B cell (primary cell): ENCODE measurements at regions of chr6 and their contacts with region 1.

Region 1: GRCh38 chr6:134235937-134236751 is 81.8 kb downstream of the SGK1 start:
- DNase-seq: peak; percentile 87
- ATAC-seq: peak; percentile 84
- H3K4me3 ChIP-seq: peak overlapping the region in 1 of 5 experiments; percentile 10
- H3K4me3 Mint-ChIP-seq: peak overlapping the region; percentile 52
- H3K27ac ChIP-seq: peak overlapping the region; percentile 94 to 97
- H3K27ac Mint-ChIP-seq: peak overlapping the region; percentile 93
- H3K4me1 ChIP-seq: peaks cover 42 to 47% of the 10 kb centered on the region in 2 donors
- H3K4me1 Mint-ChIP-seq: peaks cover 46% of the 10 kb centered on the region
- H3K27me3 ChIP-seq: no peaks in the 10 kb centered on the region
- H3K27me3 Mint-ChIP-seq: no peaks in the 10 kb centered on the region
- CTCF ChIP-seq: no peak

Region 2: GRCh38 chr6:134247231-134247833 is 11.2 kb after region 1 on chr6:
- CTCF ChIA-PET with region 1: interaction called, 4 read pairs
- POLR2A ChIA-PET with region 1: no interaction called
- intact Hi-C with region 1: loop called (anchors 1 kb)
- DNase-seq: peak; percentile 94
- ATAC-seq: peak; percentile 80
- H3K4me3 ChIP-seq: peak overlapping the region in 1 of 5 experiments; percentile 41
- H3K4me3 Mint-ChIP-seq: peak overlapping the region; percentile 38
- H3K27ac ChIP-seq: peak overlapping the region; percentile 80 to 87
- H3K27ac Mint-ChIP-seq: peak overlapping the region; percentile 87
- H3K4me1 ChIP-seq: peaks cover 47 to 48% of the 10 kb centered on the region in 2 donors
- H3K4me1 Mint-ChIP-seq: peaks cover 41% of the 10 kb centered on the region
- H3K27me3 ChIP-seq: no peaks in the 10 kb centered on the region
- H3K27me3 Mint-ChIP-seq: no peaks in the 10 kb centered on the region
- CTCF ChIP-seq: no peak

Region 3: DNA sequence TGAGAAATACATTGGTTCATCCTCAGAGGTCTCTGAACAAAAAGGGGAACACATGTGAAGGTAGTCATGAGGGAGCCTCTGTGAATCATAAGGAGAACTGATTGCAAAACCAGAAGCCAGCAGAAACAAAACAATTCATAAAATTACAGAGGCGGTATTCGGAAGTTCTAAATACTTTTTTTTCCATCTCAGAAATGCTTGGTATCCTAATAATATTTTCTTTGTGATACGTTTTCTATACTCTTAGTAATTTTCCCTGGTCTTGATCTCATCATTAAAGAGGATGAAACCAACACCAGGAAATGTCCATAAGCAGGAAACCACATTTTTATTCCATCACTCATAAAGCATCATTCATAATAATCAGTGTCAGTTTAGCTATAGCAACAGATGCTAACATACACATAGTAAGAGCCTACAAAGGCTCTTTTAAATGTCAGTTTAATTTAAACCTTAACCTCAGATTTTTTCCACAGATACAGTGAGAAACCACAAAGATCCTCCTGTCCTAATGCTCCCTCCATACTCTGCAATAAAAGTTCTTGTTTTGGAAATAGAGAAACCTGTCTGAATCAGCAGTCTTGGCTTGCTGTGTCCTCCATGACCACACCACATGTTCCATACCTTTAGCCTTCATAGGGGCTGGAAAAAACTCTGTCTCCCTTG is 52.5 kb after region 1 on chr6:
- CTCF ChIA-PET with region 1: no interaction called
- POLR2A ChIA-PET with region 1: no interaction called
- intact Hi-C with region 1: loop called (anchors 2 kb)
- DNase-seq: peak; percentile 50
- ATAC-seq: peak; percentile 64
- H3K4me3 ChIP-seq: no peak overlapping the region
- H3K4me3 Mint-ChIP-seq: peak overlapping the region; percentile 30
- H3K27ac ChIP-seq: peak overlapping the region in 1 of 2 donors; percentile 28
- H3K27ac Mint-ChIP-seq: peak overlapping the region; percentile 47
- H3K4me1 ChIP-seq: peaks cover 12% of the 10 kb centered on the region in 2 donors
- H3K4me1 Mint-ChIP-seq: peaks cover 19% of the 10 kb centered on the region
- H3K27me3 ChIP-seq: no peaks in the 10 kb centered on the region
- H3K27me3 Mint-ChIP-seq: no peaks in the 10 kb centered on the region
- CTCF ChIP-seq: no peak

Region 4: DNA sequence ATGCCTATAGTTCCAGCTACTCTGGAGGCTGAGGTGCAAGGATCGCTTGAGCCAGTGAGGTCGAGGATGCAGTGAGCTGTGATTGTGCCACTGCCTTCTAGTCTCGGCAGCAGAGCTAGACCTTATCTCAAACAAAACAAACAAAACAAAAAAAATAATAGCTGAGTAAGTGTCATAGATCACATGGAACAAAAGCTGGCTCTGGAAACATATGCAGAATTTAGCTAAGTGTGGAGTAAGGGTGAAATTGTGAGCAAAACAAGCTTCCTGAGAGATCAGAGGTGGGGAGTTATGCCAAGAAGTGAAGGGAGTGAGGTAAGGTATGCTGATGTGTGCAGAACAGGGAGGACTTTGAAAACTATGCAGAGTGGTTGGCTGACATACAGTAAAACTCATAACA is 63.1 kb after region 1 on chr6:
- CTCF ChIA-PET with region 1: no interaction called
- POLR2A ChIA-PET with region 1: interaction called, 11 read pairs
- intact Hi-C with region 1: no loop called
- DNase-seq: no peak
- ATAC-seq: no peak
- H3K4me3 ChIP-seq: no peak overlapping the region
- H3K4me3 Mint-ChIP-seq: no peak overlapping the region
- H3K27ac ChIP-seq: no peak overlapping the region
- H3K27ac Mint-ChIP-seq: no peak overlapping the region
- H3K4me1 ChIP-seq: peaks cover 0 to 11% of the 10 kb centered on the region in 2 donors
- H3K4me1 Mint-ChIP-seq: peaks cover 6% of the 10 kb centered on the region
- H3K27me3 ChIP-seq: no peaks in the 10 kb centered on the region
- H3K27me3 Mint-ChIP-seq: no peaks in the 10 kb centered on the region
- CTCF ChIP-seq: no peak

Region 5: DNA sequence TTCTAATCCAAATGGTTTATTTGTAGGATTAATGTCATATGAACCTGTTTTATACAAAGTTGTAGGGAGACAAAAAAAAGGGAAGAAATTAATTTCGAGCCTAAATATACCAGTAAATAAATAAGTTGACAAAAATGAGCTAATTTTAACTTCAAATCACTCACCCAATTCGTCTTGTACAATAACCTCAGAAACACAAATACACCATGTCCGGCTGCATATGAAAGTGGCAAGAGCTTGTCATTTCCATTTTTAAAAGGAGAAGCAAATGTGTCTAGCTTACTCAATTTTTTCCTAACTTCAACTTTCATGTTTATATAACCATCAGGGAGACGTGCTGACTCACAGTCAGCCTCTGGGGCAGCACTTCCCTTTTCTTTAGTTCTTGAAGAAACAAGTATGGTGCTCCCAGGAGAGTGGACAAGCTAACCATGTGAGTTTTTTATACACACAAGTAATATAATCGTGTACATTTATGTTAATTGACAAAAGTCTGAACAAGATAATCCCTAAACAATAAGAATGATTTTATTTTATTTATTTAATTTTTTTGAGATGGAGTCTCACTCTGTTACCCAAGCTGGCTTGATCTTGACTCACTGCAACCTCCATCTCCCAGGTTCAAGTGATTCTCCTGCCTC is 137.3 kb after region 1 on chr6:
- CTCF ChIA-PET with region 1: interaction called, 3 read pairs
- POLR2A ChIA-PET with region 1: interaction called, 5 read pairs
- intact Hi-C with region 1: loop called (anchors 1 kb)
- DNase-seq: peak; percentile 68
- ATAC-seq: peak; percentile 93
- H3K4me3 ChIP-seq: peak overlapping the region in 1 of 5 experiments; percentile 8
- H3K4me3 Mint-ChIP-seq: peak overlapping the region; percentile 3
- H3K27ac ChIP-seq: no peak overlapping the region
- H3K27ac Mint-ChIP-seq: peak overlapping the region; percentile 22
- H3K4me1 ChIP-seq: peaks cover 10 to 14% of the 10 kb centered on the region in 2 donors
- H3K4me1 Mint-ChIP-seq: peaks cover 23% of the 10 kb centered on the region
- H3K27me3 ChIP-seq: no peaks in the 10 kb centered on the region
- H3K27me3 Mint-ChIP-seq: no peaks in the 10 kb centered on the region
- CTCF ChIP-seq: no peak

Region 6: GRCh38 chr6:135331002-135331401 is 1094.9 kb after region 1 on chr6:
- CTCF ChIA-PET with region 1: no interaction called
- POLR2A ChIA-PET with region 1: interaction called, 12 read pairs
- intact Hi-C with region 1: no loop called
- DNase-seq: no peak
- ATAC-seq: no peak
- H3K4me3 ChIP-seq: no peak overlapping the region
- H3K4me3 Mint-ChIP-seq: no peak overlapping the region
- H3K27ac ChIP-seq: no peak overlapping the region
- H3K27ac Mint-ChIP-seq: no peak overlapping the region
- H3K4me1 ChIP-seq: no peaks in the 10 kb centered on the region
- H3K4me1 Mint-ChIP-seq: no peaks in the 10 kb centered on the region
- H3K27me3 ChIP-seq: no peaks in the 10 kb centered on the region
- H3K27me3 Mint-ChIP-seq: no peaks in the 10 kb centered on the region
- CTCF ChIP-seq: no peak